Sigmoid colon (tissue), 7 donors: ENCODE measurements at regions of chr1 and their contacts with region 1.

Region 1: GRCh38 chr1:10867138-10867721 is 70.8 kb upstream of the CASZ1 start:
- DNase-seq: peak; percentile 67
- H3K4me3 ChIP-seq: peak overlapping the region; percentile 26 to 64 (median 54)
- H3K27ac ChIP-seq: peak overlapping the region in 3 of 4 donors; percentile 6 to 60 (median 13)
- H3K4me1 ChIP-seq: peaks cover 0 to 17% (median 13%) of the 10 kb centered on the region in 4 donors
- H3K27me3 ChIP-seq: peaks cover 0 to 10% (median 5%) of the 10 kb centered on the region in 3 donors
- CTCF ChIP-seq: peak in 2 of 4 experiments; percentile 27 to 85
- EP300 ChIP-seq: no peak
- POLR2A ChIP-seq: no peak

Region 2: DNA sequence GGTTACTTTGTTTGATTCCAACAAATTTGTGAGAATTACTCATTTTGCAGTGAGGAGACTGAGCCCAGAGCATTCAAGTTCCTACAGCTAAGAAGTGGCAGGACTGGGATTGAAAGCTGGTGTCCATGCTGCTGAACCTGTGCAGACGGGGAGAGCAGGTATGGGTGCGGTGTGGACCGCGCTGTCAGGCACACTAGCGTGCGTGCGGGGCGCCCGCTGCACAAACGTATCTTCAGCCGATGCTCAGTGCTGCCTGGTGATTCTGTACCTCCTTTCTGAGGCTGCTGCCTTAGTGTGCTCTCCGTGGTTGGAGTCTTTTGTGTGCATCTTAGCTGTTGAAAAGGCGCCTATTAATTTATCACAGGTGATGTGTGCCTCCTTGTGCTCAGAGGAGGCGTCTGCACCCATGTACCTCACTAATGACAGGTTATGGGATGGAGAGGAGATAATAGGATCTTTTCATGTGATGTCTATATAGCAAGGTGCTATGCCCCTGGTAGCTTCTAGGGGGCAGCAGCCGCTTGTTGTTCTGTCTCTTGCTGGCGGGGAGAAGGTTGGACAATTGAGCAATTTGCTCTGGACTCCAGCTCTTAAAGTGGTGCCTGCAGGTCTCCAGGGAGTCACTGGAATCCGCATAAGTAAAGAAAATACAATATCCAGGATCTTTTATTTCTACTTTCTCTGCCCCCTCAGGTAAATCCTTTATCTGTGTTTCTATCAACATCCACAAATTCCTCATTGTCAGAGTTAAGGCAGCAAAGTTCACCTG is 359.9 kb before region 1 on chr1:
- intact Hi-C with region 1: loop called (anchors 1 kb)
- DNase-seq: peak; percentile 86
- H3K4me3 ChIP-seq: no peak overlapping the region
- H3K27ac ChIP-seq: no peak overlapping the region
- H3K4me1 ChIP-seq: peaks cover 0 to 25% (median 22%) of the 10 kb centered on the region in 4 donors
- H3K27me3 ChIP-seq: no peaks in the 10 kb centered on the region
- CTCF ChIP-seq: peak; percentile 55 to 82 (median 73)
- EP300 ChIP-seq: no peak
- POLR2A ChIP-seq: no peak

Region 3: DNA sequence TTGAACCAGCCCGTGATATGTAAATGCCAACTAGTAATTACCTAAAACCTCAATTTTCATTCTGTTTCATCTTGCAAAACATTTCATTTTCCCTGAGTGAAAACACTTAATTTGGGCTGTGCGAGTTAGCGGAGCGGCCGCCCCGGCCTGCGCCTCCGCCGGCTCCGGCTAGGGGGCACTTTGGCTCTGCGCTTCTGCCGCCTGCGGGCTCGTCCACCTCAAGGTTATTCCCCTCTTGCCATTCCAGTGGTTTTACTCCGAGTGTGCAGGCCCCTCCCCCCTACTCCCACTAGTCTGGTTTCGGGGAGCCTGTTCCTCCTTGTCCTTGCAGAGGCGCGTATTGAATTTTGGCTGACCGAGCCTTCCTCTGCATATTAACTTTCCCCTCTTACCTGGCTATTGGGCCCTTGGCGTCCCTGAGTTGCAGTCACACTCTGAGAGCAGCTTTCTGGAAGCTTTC is 336.9 kb before region 1 on chr1:
- intact Hi-C with region 1: loop called (anchors 1 kb)
- DNase-seq: peak; percentile 82
- H3K4me3 ChIP-seq: peak overlapping the region in 2 of 4 donors; percentile 5 to 18
- H3K27ac ChIP-seq: peak overlapping the region; percentile 25 to 90 (median 75)
- H3K4me1 ChIP-seq: peaks cover 0 to 55% (median 40%) of the 10 kb centered on the region in 4 donors
- H3K27me3 ChIP-seq: no peaks in the 10 kb centered on the region
- CTCF ChIP-seq: peak; percentile 69 to 81 (median 75)
- EP300 ChIP-seq: no peak
- POLR2A ChIP-seq: no peak

Region 4: GRCh38 chr1:10694633-10695627 is 172.3 kb before region 1 on chr1:
- intact Hi-C with region 1: loop called (anchors 10 kb)
- DNase-seq: peak; percentile 96
- H3K4me3 ChIP-seq: peak overlapping the region; percentile 38 to 89 (median 76)
- H3K27ac ChIP-seq: peak overlapping the region; percentile 88 to 97 (median 92)
- H3K4me1 ChIP-seq: peaks cover 0 to 71% (median 66%) of the 10 kb centered on the region in 4 donors
- H3K27me3 ChIP-seq: no peaks in the 10 kb centered on the region
- CTCF ChIP-seq: no peak
- EP300 ChIP-seq: no peak
- POLR2A ChIP-seq: no peak

Region 5: GRCh38 chr1:10796019-10796944 is 70.9 kb before region 1 on chr1 and contains the start of gene CASZ1:
- intact Hi-C with region 1: loop called (anchors 5 kb)
- DNase-seq: peak; percentile 90
- H3K4me3 ChIP-seq: peak within 1 kb of the TSS; percentile 65 to 85 (median 78)
- H3K27ac ChIP-seq: peak within 1 kb of the TSS; percentile 79 to 92 (median 90)
- H3K4me1 ChIP-seq: peaks cover 0 to 46% (median 38%) of the 10 kb centered on the region in 4 donors
- H3K27me3 ChIP-seq: peaks cover 5 to 36% (median 11%) of the 10 kb centered on the region in 3 donors
- CTCF ChIP-seq: no peak
- EP300 ChIP-seq: peak in 1 of 4 donors; percentile 75
- POLR2A ChIP-seq: peak; percentile 27 to 72
- total RNA-seq, gene CASZ1: 12.7 to 47.9 (median 32.3) TPM